ENCODE measurements at regions of chr19 and their contacts with region 1.

Region 1: GRCh38 chr19:11035441-11036377 is 53.6 kb upstream of the LDLR start:
- DNase-seq: peak; percentile 92
- H3K4me3 ChIP-seq: peak overlapping the region in 1 of 2 experiments; percentile 14; a peak in 1 of 4 replicates
- H3K27ac ChIP-seq: no peak overlapping the region
- H3K4me1 ChIP-seq: no peaks in the 10 kb centered on the region
- H3K27me3 ChIP-seq: no peaks in the 10 kb centered on the region
- CTCF ChIP-seq: peak; percentile 81
- EP300 ChIP-seq: no peak
- RAD21 ChIP-seq: peak; percentile 80

Region 2: DNA sequence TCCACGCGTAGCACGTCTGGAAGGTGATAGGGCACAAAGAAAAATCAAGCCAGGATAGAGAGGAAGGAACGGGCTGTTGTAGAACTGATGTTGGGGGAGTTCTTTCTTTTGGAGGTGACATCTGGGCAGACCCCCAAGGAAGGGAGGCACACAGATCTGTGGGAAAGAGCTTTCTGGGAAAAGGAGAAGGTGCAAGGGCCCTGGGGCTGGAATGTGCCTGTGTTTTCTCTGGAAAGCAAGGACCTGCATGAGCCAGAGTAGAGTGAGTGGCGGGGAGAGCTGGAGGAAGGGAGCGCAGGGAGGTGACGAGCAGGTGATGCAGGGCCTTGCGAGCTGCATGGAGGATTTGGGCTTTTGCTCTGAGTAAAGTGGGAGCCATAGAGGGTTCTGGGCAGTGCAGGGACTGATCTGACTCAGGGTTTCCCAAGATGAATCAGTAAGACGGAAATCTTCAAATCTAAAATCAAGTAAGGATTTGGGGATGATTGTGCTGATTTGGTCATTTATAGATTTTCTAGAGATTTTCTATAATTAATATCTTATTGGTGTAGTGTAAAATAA is 44.1 kb before region 1 on chr19:
- CTCF ChIA-PET with region 1: no interaction called
- POLR2A ChIA-PET with region 1: no interaction called
- DNase-seq: no peak
- H3K4me3 ChIP-seq: no peak overlapping the region
- H3K27ac ChIP-seq: no peak overlapping the region
- H3K4me1 ChIP-seq: no peaks in the 10 kb centered on the region
- H3K27me3 ChIP-seq: no peaks in the 10 kb centered on the region
- CTCF ChIP-seq: no peak
- EP300 ChIP-seq: no peak
- RAD21 ChIP-seq: no peak

Region 3: GRCh38 chr19:11011668-11012067 is 24.0 kb before region 1 on chr19:
- CTCF ChIA-PET with region 1: interaction called, 20 read pairs
- POLR2A ChIA-PET with region 1: no interaction called
- DNase-seq: no peak
- H3K4me3 ChIP-seq: no peak overlapping the region
- H3K27ac ChIP-seq: no peak overlapping the region
- H3K4me1 ChIP-seq: no peaks in the 10 kb centered on the region
- H3K27me3 ChIP-seq: no peaks in the 10 kb centered on the region
- CTCF ChIP-seq: no peak
- EP300 ChIP-seq: no peak
- RAD21 ChIP-seq: no peak

Region 4: DNA sequence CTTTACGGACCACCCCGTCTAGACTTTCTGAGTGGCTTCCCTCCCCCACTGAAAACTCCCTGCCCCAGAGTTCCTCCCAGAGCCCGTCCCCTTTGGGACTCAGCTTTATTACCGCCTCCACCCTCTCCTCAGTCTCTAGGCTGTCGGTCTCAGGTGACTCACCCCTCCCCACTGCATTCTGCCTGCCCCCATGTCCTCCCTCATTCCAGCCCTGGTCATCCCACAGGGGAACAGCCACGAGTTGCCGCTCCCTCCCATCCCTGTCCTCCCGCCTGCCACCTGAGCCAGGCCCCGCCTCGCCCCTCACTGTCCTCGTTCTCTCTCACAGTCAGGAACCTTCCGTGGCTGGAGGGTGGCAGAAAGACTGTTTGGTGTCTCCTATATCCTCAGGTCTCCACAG is 17.5 kb before region 1 on chr19:
- CTCF ChIA-PET with region 1: interaction called, 36 read pairs
- POLR2A ChIA-PET with region 1: no interaction called
- DNase-seq: no peak
- H3K4me3 ChIP-seq: no peak overlapping the region
- H3K27ac ChIP-seq: no peak overlapping the region
- H3K4me1 ChIP-seq: no peaks in the 10 kb centered on the region
- H3K27me3 ChIP-seq: no peaks in the 10 kb centered on the region
- CTCF ChIP-seq: no peak
- EP300 ChIP-seq: no peak
- RAD21 ChIP-seq: no peak

Region 5: DNA sequence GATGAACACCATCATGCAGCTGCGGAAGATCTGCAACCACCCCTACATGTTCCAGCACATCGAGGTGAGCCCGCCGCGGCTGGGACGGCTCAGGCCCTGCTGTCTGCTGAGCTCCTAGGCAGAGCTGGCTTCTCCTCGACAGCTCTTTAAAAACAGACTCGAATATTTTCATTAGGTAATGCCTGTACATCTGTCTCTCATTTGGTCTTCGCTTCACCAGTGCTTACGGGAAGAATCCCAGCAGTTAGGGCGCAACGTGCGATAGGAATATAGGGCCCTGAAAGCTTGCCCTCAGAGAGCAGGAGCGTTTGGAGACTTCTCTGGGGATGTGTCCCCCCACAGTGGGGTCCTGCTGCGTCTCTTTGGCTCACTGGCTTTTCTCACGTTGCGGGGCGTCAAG is 10.3 kb before region 1 on chr19:
- CTCF ChIA-PET with region 1: interaction called, 36 read pairs
- POLR2A ChIA-PET with region 1: no interaction called
- DNase-seq: no peak
- H3K4me3 ChIP-seq: no peak overlapping the region
- H3K27ac ChIP-seq: no peak overlapping the region
- H3K4me1 ChIP-seq: no peaks in the 10 kb centered on the region; a peak in 1 of 4 replicates
- H3K27me3 ChIP-seq: no peaks in the 10 kb centered on the region
- CTCF ChIP-seq: no peak
- EP300 ChIP-seq: no peak
- RAD21 ChIP-seq: no peak

Region 6: DNA sequence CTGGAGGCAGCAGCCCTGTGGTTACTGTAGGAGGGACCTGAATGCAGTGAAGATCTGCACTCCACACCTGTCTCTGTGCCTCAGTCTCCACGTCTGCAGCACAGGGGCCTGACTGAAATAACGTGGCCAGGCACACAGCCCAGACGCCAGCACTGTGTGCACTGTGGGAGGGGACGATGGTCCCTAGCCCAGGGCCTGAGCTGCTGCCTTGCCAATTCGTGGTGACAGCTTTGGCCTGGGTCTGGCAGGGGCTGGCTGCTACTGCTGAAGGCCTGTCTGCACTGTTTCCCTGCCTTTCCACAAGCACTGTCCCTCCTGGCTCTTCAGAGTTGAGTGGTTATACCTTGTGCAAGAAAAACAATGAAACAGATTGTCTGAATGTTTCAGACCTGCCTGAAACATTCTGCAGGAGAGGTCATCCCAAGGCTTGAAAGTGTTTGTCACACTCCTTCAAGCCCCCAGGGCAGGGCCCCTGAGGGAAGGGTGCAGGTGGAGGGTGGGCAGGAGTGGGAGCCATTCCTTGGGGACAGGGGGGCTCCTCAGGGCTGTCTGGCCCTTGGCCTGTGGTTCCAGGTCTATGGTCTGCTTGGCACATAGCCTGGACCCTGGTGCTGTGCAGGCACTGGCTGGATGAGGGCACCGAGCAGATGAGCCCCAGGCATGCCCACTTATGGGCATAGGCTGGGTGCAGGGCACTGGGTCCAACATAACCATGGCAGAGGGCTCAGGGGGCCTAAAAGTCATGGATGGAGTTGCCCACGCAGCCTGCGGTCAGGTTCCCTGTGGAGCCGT is 14.8 kb after region 1 on chr19:
- CTCF ChIA-PET with region 1: interaction called, 12 read pairs
- POLR2A ChIA-PET with region 1: no interaction called
- DNase-seq: no peak
- H3K4me3 ChIP-seq: no peak overlapping the region
- H3K27ac ChIP-seq: no peak overlapping the region; a peak in 1 of 4 replicates
- H3K4me1 ChIP-seq: peaks cover 0 to 9% of the 10 kb centered on the region in 2 experiments; a peak in 1 of 4 replicates
- H3K27me3 ChIP-seq: no peaks in the 10 kb centered on the region
- CTCF ChIP-seq: no peak
- EP300 ChIP-seq: no peak
- RAD21 ChIP-seq: no peak

Region 7: DNA sequence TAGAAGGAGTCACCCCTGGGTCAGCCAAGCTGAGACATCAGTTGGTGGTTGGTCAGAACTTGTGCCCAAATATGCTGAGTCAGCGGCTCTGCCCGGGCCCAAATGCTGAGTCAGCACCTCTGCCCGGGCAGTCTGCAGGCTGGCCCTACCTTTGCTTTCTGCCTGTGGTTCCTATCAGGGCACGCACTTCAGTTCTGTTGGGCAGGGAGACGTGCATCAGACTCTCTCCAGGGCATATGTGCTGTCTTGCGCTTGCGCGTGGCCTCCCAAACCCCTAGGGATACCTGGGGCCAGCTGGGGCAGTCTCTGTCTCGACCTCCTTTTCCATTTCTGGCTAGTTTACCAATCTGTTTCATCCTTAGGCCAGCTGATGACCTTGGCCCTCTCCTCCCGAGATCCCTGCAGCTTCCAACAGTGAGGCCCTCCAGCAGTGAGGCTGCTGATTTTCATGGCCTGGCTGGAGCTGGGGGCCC is 29.2 kb after region 1 on chr19:
- CTCF ChIA-PET with region 1: interaction called, 13 read pairs
- POLR2A ChIA-PET with region 1: no interaction called
- DNase-seq: no peak
- H3K4me3 ChIP-seq: no peak overlapping the region
- H3K27ac ChIP-seq: no peak overlapping the region; a peak in 1 of 4 replicates
- H3K4me1 ChIP-seq: no peaks in the 10 kb centered on the region
- H3K27me3 ChIP-seq: no peaks in the 10 kb centered on the region
- CTCF ChIP-seq: no peak
- EP300 ChIP-seq: no peak
- RAD21 ChIP-seq: no peak